ENCODE measurements at regions of chr2 and their contacts with region 1.

Region 1: GRCh38 chr2:212912445-212913103 is 238.8 kb downstream of the IKZF2 start:
- DNase-seq: no peak
- ATAC-seq: peak in 2 of 4 donors; percentile 62 to 68
- H3K4me3 ChIP-seq: no peak overlapping the region
- H3K27ac ChIP-seq: peak overlapping the region in 1 of 3 donors; percentile 3
- H3K4me1 ChIP-seq: no peaks in the 10 kb centered on the region
- H3K27me3 ChIP-seq: no peaks in the 10 kb centered on the region
- CTCF ChIP-seq: no peak
- POLR2A ChIP-seq: no peak

Region 2: DNA sequence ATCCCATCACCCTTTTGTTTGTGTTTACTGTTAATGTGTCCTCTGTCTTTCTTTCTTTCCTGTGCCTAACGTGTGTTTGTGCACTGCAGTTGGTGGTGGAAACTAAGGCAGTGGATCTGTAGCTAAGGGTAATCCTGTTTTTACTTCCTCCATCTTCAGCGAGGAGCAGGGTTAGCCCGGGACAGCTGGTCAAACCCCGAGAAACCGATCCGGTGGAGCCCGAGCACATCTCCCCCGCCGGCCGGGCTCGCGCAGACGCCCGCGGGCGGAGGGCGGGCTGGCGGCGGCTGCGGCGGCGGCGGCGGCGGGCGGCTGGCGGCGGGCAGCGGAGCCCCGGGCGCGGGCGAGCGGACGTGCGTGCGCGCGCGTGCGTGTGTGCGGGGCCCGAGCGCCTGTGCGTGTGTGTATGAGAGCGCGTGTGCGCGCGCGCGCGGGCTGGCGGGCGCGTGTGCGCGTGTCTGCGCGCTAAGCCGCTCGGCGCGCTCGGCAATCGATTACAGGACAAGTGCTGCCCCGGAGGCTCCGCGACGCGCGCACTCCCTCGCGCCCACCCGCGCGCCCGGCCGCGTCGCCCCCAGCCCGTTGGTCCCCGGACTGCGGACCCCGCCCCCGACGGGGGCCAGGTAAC is 239.0 kb after region 1 on chr2 and contains the start of gene IKZF2:
- intact Hi-C with region 1: loop called in 1 of 2 experiments (anchors 10 kb)
- DNase-seq: peak; percentile 87 to 91 (median 91)
- ATAC-seq: peak; percentile 76 to 93 (median 90)
- H3K4me3 ChIP-seq: peak within 1 kb of the TSS; percentile 76 to 81 (median 78)
- H3K27ac ChIP-seq: peak within 1 kb of the TSS; percentile 91 to 95 (median 92)
- H3K4me1 ChIP-seq: peaks cover 0 to 16% (median 6%) of the 10 kb centered on the region in 4 donors
- H3K27me3 ChIP-seq: no peaks in the 10 kb centered on the region
- CTCF ChIP-seq: no peak
- POLR2A ChIP-seq: peak; percentile 77
- total RNA-seq, gene IKZF2: 1.1 to 4.1 (median 1.9) TPM

Region 3: GRCh38 chr2:213175526-213176162 is 263.1 kb after region 1 on chr2:
- intact Hi-C with region 1: no loop called
- DNase-seq: no peak
- ATAC-seq: no peak
- H3K4me3 ChIP-seq: no peak overlapping the region
- H3K27ac ChIP-seq: no peak overlapping the region
- H3K4me1 ChIP-seq: no peaks in the 10 kb centered on the region
- H3K27me3 ChIP-seq: no peaks in the 10 kb centered on the region
- CTCF ChIP-seq: no peak
- POLR2A ChIP-seq: no peak